Activated T-helper 1 cell treated with anti-CD3 and anti-CD28 coated beads, Interleukin-12 subunit alpha, Interleukin-12 subunit beta, Interleukin-2, Interleukin-4 antibody, amounts not matched to agents 30 ng/mL and 10 ng/mL and 1 ng/mL, durations not matched to agents 14 hours and 24 hours and 36 hours (primary cell): ENCODE measurements at regions of chr6 and their contacts with region 1.

Region 1: GRCh38 chr6:13668291-13668928 is 43.2 kb downstream of the RANBP9 start:
- DNase-seq: no peak
- H3K4me3 Mint-ChIP-seq: no peak overlapping the region
- H3K27ac Mint-ChIP-seq: peak overlapping the region; percentile 77
- H3K4me1 Mint-ChIP-seq: peaks cover 83% of the 10 kb centered on the region
- H3K27me3 Mint-ChIP-seq: no peaks in the 10 kb centered on the region

Region 2: DNA sequence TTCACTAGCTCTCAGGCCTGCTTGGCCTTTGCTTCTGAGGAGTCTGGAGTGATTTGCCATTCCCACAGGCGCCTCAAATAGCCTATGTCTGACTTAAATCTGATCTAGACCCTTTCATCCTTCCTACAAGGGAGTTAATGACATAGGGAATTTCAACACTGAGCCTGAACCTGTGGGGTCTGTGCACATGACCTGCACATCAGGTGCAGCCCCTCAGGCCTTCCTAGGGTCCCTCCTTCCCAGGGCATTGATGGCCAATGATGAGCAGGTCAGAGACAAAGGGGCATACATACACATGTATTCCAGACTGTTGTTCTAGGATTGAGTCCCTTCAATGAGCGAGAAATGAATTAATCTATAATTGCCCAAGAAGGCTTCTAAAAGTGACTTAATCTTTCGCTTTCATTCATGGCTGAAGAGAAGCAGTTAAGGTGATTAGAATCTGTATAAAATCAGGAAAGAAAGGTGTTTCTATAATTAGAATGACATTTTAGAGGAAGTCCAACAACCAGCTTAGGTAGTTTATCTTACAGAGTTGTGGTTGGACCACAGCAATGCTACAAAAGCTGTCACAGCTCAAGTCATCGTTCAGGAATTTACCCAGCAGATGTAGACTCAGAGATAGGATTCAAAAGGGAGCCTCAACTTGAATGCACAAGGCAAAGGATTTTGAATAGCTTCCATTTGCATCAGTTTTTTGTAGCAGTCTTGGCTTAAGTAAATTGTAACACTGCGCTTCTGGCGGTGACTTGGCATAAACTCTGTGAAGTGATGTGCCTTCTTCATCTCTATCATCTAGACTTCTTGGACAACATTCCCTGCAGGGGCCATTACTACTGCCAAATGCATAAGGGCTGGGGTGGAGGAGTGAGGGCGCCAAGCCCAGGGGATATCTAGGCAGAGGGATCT is 313.1 kb before region 1 on chr6:
- intact Hi-C with region 1: loop called (anchors 5 kb)
- DNase-seq: peak; percentile 36
- H3K4me3 Mint-ChIP-seq: peak overlapping the region; percentile 75
- H3K27ac Mint-ChIP-seq: peak overlapping the region; percentile 95
- H3K4me1 Mint-ChIP-seq: peaks cover 67% of the 10 kb centered on the region
- H3K27me3 Mint-ChIP-seq: no peaks in the 10 kb centered on the region

Region 3: DNA sequence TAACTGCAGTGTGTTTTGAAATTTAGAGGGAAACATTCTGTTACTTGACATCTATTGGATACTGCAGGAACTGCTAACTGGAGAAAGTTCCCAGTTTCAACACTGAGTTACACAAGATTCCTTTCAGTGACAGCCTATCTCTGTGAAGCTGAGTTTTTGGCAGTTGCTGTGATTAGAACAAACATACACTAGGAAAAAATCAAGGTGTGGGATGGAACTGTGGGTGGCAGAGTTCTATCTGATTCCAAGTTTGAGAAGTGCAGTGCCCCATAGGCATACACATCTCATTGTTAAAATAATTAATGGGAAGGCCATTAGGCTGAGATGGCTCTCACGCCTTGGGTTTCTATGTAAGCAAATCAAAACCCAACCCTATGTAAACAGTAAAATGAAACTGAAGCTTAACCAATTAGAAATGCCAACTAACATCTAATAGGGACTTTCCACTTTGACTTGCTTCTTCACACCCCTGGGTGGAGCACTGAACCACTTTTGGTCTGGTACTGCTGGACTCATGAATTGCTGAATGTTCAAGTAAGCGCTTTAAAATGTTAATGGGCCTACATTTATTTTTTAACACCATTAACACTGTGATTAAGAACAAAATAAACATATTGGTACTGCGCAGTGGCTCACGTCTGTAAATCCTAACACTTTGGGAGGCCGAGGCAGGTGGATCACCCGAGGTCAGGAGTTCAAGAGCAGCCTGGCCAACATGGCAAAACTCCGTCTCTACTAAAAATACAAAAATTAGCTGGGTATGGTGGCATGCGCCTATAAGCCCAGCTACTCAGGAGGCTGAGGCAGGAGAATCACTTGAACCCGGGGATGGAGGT is 284.9 kb before region 1 on chr6:
- intact Hi-C with region 1: no loop called
- DNase-seq: peak; percentile 17
- H3K4me3 Mint-ChIP-seq: no peak overlapping the region
- H3K27ac Mint-ChIP-seq: peak overlapping the region; percentile 18
- H3K4me1 Mint-ChIP-seq: peaks cover 38% of the 10 kb centered on the region
- H3K27me3 Mint-ChIP-seq: no peaks in the 10 kb centered on the region

Region 4: GRCh38 chr6:13624871-13625288 is 43.5 kb before region 1 on chr6:
- intact Hi-C with region 1: loop called (anchors 2 kb)
- DNase-seq: no peak
- H3K4me3 Mint-ChIP-seq: no peak overlapping the region
- H3K27ac Mint-ChIP-seq: peak overlapping the region; percentile 36
- H3K4me1 Mint-ChIP-seq: peaks cover 34% of the 10 kb centered on the region
- H3K27me3 Mint-ChIP-seq: no peaks in the 10 kb centered on the region

Region 5: GRCh38 chr6:13648851-13649250 is 19.6 kb before region 1 on chr6:
- intact Hi-C with region 1: loop called (anchors 2 kb)
- DNase-seq: no peak
- H3K4me3 Mint-ChIP-seq: no peak overlapping the region
- H3K27ac Mint-ChIP-seq: no peak overlapping the region
- H3K4me1 Mint-ChIP-seq: peaks cover 10% of the 10 kb centered on the region
- H3K27me3 Mint-ChIP-seq: no peaks in the 10 kb centered on the region

Region 6: GRCh38 chr6:13681305-13682061 is 13.1 kb after region 1 on chr6:
- intact Hi-C with region 1: loop called (anchors 2 kb)
- DNase-seq: no peak
- H3K4me3 Mint-ChIP-seq: peak overlapping the region; percentile 29
- H3K27ac Mint-ChIP-seq: peak overlapping the region; percentile 57
- H3K4me1 Mint-ChIP-seq: peaks cover 39% of the 10 kb centered on the region
- H3K27me3 Mint-ChIP-seq: no peaks in the 10 kb centered on the region

Region 7: DNA sequence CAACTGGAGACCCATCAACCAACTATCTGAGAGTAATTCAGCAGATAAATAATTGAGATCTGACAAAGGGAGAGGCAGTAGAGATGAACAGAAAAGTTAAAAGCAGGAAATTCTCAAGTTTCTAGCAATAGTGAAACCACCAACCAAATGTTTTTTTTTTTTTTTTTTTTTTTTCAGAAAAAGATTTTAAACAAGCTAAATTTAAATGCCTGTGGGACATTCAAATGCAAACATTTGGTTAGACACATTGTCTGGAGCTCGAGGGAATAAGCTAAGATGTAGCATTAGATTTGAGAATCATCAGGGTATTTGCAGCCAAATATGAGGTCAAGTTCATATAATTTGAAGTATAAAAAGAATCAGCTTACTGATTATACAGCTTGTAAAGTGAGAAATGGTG is 26.8 kb after region 1 on chr6:
- intact Hi-C with region 1: loop called (anchors 2 kb)
- DNase-seq: no peak
- H3K4me3 Mint-ChIP-seq: peak overlapping the region; percentile 59
- H3K27ac Mint-ChIP-seq: peak overlapping the region; percentile 67
- H3K4me1 Mint-ChIP-seq: peaks cover 53% of the 10 kb centered on the region
- H3K27me3 Mint-ChIP-seq: no peaks in the 10 kb centered on the region

Region 8: DNA sequence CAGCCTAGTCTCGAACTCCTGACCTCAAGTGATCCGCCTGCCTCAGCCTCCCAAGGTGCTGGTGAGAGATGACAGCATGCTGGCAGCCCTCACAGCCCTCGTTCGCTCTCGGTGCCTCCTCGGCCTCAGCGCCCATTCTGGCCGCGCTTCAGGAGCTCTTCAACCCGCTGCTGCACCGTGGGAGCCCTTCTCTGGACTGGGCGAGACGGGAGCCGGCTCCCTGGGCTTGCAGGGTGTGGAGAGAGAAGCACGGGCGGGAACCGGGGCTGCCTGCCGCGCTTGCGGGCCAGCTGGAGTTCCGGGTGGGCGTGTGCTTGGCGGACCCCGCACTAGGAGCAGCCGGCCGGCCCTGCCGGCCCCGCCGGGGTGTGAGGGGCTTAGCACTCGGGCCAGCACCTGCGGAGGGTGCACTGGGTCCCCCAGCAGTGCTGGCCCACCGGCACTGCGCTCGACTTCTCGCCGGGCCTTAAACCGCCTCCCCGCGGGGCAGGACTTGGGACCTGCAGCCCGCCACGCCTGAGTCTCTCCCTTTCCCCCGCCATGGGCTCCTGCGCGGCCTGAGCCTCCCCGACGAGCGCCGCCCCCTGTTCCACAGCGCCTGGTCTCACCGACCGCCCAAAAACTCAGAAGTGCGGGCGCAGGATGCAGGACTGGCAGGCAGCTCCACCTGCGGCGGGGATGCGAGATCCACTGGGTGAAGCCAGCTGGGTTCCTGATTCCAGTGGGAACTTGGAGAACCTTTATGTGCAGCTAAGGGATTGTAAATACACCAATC is 74.7 kb after region 1 on chr6:
- intact Hi-C with region 1: no loop called
- DNase-seq: no peak
- H3K4me3 Mint-ChIP-seq: no peak overlapping the region
- H3K27ac Mint-ChIP-seq: no peak overlapping the region
- H3K4me1 Mint-ChIP-seq: peaks cover 8% of the 10 kb centered on the region
- H3K27me3 Mint-ChIP-seq: no peaks in the 10 kb centered on the region

Region 9: GRCh38 chr6:13787137-13787536 is 118.7 kb after region 1 on chr6:
- intact Hi-C with region 1: loop called (anchors 1 kb)
- DNase-seq: no peak
- H3K4me3 Mint-ChIP-seq: peak overlapping the region; percentile 41
- H3K27ac Mint-ChIP-seq: peak overlapping the region; percentile 82
- H3K4me1 Mint-ChIP-seq: peaks cover 33% of the 10 kb centered on the region
- H3K27me3 Mint-ChIP-seq: no peaks in the 10 kb centered on the region

Region 10: GRCh38 chr6:13965582-13966127 is 297.2 kb after region 1 on chr6:
- intact Hi-C with region 1: no loop called
- DNase-seq: no peak
- H3K4me3 Mint-ChIP-seq: no peak overlapping the region
- H3K27ac Mint-ChIP-seq: no peak overlapping the region
- H3K4me1 Mint-ChIP-seq: no peaks in the 10 kb centered on the region
- H3K27me3 Mint-ChIP-seq: peaks cover 17% of the 10 kb centered on the region